Ovary (tissue), 10 donors: ENCODE measurements at regions of chr13 and their contacts with region 1.

Region 1: DNA sequence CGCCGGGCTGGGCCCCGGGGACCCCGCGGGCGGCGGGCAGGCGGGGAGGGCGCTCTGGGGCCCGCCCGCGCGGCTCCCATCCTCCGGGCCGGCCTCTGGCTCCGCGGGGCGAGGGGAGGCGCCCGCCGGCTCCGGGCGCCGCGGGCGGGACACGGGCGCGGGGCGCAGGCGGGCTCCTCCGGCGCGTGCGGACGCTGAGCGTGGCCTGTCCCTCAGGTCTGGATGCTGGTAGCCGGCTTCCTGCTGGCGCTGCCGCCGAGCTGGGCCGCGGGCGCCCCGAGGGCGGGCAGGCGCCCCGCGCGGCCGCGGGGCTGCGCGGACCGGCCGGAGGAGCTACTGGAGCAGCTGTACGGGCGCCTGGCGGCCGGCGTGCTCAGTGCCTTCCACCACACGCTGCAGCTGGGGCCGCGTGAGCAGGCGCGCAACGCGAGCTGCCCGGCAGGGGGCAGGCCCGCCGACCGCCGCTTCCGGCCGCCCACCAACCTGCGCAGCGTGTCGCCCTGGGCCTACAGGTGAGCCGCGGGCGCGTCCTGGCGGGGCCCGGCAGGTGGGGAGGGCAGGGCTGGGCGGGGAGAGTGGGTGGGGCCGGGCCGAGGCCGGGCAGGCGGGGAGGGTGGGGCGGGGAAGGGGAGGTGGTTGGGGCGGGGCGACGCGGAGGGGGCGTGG is 414 bp downstream of the IL17D start:
- DNase-seq: peak; percentile 70 to 86 (median 77)
- H3K4me3 ChIP-seq: peak overlapping the region; percentile 46
- H3K27ac ChIP-seq: peak overlapping the region; percentile 57 to 62
- H3K4me1 ChIP-seq: peaks cover 2% of the 10 kb centered on the region
- H3K27me3 ChIP-seq: no peaks in the 10 kb centered on the region
- CTCF ChIP-seq: peak; percentile 17 to 81 (median 72)
- EP300 ChIP-seq: no peak
- POLR2A ChIP-seq: no peak

Region 2: GRCh38 chr13:20566282-20566897 is 137.5 kb before region 1 on chr13:
- intact Hi-C with region 1: no loop called
- DNase-seq: peak in 1 of 5 donors; percentile 65
- H3K4me3 ChIP-seq: peak overlapping the region; percentile 82
- H3K27ac ChIP-seq: peak overlapping the region; percentile 78 to 80
- H3K4me1 ChIP-seq: peaks cover 1% of the 10 kb centered on the region
- H3K27me3 ChIP-seq: no peaks in the 10 kb centered on the region
- CTCF ChIP-seq: no peak
- EP300 ChIP-seq: no peak
- POLR2A ChIP-seq: no peak

Region 3: DNA sequence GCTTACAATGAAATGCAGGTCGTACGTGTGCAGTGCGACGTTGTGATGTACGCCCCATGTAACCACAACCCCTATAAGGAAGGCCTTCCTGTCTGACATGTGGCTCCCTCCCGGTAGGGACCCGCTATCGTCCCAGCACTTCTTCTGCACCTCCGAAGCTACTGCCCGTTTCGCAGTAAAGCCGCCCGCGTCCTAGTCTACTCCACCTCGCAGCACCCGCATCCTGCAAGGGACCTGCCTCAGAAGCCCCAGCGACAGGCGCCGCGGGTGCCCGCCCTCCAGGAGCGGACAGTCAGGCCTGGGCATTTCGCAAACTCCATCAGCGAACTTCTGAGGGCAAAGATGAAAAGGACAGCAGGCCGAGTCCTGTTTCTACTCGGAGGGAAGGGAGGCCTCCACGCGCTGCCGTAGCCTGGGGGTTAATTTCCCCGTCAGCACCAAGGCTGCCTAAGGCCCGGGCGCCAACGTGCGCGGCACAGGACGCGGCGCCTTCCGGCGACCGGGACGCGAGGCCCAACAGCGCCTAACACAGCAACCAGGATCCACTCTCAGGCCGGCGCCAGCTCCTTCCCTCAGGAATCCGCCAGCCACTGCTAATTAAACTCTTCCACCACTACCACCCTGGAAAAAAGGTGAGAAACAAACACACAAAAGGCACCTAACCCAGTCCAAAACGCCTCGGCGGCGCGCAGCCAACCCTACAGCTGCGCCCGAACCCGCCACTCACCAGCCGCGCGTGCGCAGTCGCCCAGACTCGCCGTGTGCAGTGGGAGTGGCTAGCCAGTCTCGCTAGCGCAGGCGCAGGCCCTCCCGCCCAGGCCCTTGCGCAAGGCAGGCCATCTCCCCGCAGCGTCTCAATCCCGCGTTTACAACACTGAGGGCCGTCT is 69.5 kb after region 1 on chr13 and contains the start of gene EEF1AKMT1:
- intact Hi-C with region 1: loop called in 1 of 4 experiments (anchors 5 kb)
- DNase-seq: peak; percentile 95 to 97 (median 97)
- H3K4me3 ChIP-seq: peak within 1 kb of the TSS; percentile 56
- H3K27ac ChIP-seq: peak within 1 kb of the TSS; percentile 6 to 82
- H3K4me1 ChIP-seq: peaks cover 3% of the 10 kb centered on the region
- H3K27me3 ChIP-seq: no peaks in the 10 kb centered on the region
- CTCF ChIP-seq: no peak
- EP300 ChIP-seq: no peak
- POLR2A ChIP-seq: peak; percentile 90
- total RNA-seq, gene EEF1AKMT1: 11.1 to 16.4 (median 12.8) TPM

Region 4: DNA sequence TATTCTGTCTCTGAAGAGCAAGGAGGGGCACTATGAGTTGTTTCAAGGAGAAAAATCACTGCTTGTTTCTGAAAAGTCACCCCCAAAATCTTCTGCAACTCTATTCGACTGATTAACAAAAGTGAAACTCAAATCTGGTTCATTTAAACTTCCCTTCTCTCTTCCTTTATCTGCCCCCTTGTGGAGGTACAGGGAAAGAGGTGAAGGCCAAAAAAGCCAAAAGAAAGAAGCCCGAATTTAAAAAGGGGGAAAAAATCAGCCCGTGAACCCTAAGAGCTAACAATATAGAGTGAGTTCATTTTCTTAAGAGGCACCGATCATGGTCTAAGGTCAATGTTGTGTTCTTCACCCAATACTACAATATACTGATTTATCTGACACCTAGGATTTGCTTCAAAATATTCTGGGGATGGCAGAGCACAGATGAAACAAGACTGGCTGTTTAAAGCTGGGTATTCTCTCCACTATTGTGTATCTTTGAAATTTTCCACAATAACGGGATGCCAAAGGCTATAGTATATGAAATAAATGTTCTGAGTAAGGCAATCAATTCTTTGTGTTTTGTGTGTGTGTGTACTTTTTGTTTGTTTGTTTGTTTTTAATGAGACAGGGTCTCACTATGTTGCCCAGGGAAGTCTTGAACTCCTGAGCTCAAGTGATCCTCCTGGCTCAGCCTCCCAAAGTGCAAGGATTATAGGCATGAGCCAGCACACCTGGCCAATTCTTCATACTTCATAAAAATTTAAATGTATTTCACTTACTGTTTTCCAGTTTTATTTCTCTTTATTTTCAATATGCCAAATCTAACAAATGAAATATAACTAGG is 124.8 kb after region 1 on chr13:
- intact Hi-C with region 1: loop called in 2 of 4 experiments (anchors 2 to 10 kb)
- DNase-seq: peak in 1 of 5 donors; percentile 31
- H3K4me3 ChIP-seq: no peak overlapping the region
- H3K27ac ChIP-seq: no peak overlapping the region
- H3K4me1 ChIP-seq: no peaks in the 10 kb centered on the region
- H3K27me3 ChIP-seq: no peaks in the 10 kb centered on the region
- CTCF ChIP-seq: peak; percentile 51 to 67 (median 66)
- EP300 ChIP-seq: no peak
- POLR2A ChIP-seq: no peak

Region 5: DNA sequence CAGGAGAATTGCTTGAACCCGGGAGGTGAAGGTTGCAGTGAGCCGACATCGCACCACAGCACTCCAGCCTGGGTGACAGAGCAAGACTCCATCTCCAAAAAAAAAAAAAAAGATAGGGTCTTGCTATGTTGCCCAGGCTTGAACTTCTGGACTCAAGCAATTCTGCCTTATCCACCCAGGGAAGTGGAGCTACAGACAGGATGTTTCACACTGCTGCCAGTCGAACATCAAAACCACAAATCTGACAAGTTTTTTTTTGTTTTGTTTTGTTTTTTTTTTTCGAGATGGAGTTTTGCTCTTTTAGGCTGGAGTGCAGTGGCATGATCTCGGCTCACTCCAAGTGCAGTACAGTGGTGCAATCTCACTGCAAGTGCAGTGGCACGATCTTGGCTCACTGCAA is 187.9 kb after region 1 on chr13:
- intact Hi-C with region 1: no loop called
- DNase-seq: no peak
- H3K4me3 ChIP-seq: no peak overlapping the region
- H3K27ac ChIP-seq: no peak overlapping the region
- H3K4me1 ChIP-seq: no peaks in the 10 kb centered on the region
- H3K27me3 ChIP-seq: no peaks in the 10 kb centered on the region
- CTCF ChIP-seq: no peak
- EP300 ChIP-seq: no peak
- POLR2A ChIP-seq: no peak